Posterior vena cava (tissue), 2 donors: ENCODE measurements at regions of chr3 and their contacts with region 1.

Region 1: GRCh38 chr3:39839484-39839883 is 30.1 kb downstream of the MYRIP start:
- DNase-seq: no peak

Region 2: GRCh38 chr3:40790746-40791145 is 951.3 kb after region 1 on chr3:
- intact Hi-C with region 1: no loop called
- DNase-seq: no peak

Region 3: DNA sequence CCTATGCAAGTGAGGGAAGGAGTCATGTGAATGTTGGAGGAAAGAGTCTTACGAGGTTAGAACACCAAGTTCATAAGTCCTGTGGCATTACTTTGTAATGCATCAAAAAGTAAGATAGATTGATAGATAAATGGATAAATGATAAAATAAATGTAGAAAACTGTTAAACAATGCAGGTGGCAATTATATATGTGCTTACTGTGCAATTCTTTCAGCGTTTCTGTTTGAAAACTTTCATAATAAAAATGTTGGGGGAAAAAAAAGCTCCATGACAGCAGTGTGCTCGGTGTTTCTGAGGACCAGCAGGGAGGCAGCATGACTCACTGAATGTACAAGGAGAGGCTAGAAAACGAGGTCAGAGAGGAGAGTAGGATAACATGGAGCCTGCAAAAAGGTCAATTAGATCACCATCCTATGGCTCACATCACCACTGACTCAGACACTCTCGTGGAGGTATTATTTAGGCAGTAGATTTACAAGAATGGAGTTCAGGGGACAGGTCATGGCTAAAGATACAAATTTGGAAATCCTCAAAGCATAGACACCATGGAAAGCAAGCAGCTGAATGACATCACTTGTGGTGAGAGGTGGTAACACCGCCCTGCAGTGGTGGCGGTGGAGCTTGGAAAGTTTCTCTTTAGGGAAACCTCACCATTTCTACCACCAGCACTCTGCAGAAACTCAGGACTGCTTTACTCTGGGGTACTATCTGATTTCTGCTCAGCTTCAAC is 1579.6 kb after region 1 on chr3:
- intact Hi-C with region 1: loop called in 1 of 2 experiments (anchors 10 kb)
- DNase-seq: no peak